PC-9 (cell line): ENCODE measurements at regions of chr2 and their contacts with region 1.

Region 1: GRCh38 chr2:232979871-232980461 is 33.1 kb downstream of the NGEF start:
- DNase-seq: peak; percentile 91 to 99
- H3K4me3 ChIP-seq: peak overlapping the region; percentile 33; the same call in 1 of the 2 replicates
- H3K27ac ChIP-seq: peak overlapping the region; percentile 95
- H3K4me1 ChIP-seq: peaks cover 51% of the 10 kb centered on the region
- H3K27me3 ChIP-seq: no peaks in the 10 kb centered on the region
- CTCF ChIP-seq: peak; percentile 44; the same call in 1 of the 2 replicates

Region 2: DNA sequence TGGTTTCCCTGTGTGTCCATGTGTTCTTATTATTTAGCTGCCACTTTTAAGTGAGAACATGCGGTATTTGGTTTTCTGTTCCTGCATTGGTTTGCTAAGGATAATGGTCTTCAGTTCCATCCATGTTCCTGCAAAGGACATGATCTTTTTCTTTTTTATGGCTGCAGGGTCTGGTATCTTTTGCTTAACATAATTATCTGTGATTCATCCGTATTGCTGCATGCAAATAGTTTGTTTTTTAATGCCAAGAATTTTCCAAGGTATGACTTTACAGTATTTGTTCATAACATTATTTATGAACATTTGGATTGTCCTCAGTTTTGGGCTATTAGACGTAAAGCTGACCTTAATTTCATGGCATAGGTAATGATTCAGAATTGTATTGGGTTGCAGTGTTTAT is 265.0 kb before region 1 on chr2:
- CTCF ChIA-PET with region 1: no interaction called
- POLR2A ChIA-PET with region 1: no interaction called
- intact Hi-C with region 1: no loop called
- DNase-seq: peak in 1 of 2 experiments; percentile 34
- H3K4me3 ChIP-seq: no peak overlapping the region
- H3K27ac ChIP-seq: no peak overlapping the region
- H3K4me1 ChIP-seq: no peaks in the 10 kb centered on the region
- H3K27me3 ChIP-seq: no peaks in the 10 kb centered on the region
- CTCF ChIP-seq: no peak

Region 3: DNA sequence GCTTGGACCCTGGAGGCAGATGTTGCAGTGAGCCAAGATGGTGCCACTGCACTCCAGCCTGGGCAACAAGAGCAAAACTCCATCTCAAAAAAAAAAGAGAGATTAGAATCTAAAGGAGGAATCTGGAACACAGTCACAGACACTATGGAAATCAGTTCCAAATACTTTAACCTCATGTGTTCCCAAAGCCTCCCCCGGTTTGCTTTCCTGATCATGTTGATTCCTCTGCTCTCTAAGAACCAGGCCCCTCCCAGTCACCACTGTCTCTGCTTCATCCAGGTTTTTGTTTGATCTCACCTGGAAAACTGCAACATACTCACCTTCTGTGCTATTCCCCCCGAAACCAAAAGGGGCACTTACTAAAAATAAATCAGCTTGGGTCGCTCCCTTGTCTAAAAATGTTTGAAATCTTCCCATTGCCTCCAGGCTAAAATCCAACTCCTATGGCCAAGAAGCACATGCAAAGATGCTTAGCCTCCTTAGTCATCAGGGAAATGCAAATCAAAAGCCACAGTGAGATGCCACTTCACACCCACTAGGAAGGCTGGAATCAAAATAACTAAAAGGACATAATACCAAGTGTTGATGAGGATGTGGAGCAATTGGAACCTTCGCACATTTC is 46.3 kb after region 1 on chr2:
- CTCF ChIA-PET with region 1: interaction called, 7 read pairs
- POLR2A ChIA-PET with region 1: no interaction called
- intact Hi-C with region 1: loop called (anchors 1 kb)
- DNase-seq: peak; percentile 69 to 97
- H3K4me3 ChIP-seq: no peak overlapping the region
- H3K27ac ChIP-seq: peak overlapping the region; percentile 72
- H3K4me1 ChIP-seq: peaks cover 45% of the 10 kb centered on the region
- H3K27me3 ChIP-seq: no peaks in the 10 kb centered on the region
- CTCF ChIP-seq: peak; percentile 51

Region 4: DNA sequence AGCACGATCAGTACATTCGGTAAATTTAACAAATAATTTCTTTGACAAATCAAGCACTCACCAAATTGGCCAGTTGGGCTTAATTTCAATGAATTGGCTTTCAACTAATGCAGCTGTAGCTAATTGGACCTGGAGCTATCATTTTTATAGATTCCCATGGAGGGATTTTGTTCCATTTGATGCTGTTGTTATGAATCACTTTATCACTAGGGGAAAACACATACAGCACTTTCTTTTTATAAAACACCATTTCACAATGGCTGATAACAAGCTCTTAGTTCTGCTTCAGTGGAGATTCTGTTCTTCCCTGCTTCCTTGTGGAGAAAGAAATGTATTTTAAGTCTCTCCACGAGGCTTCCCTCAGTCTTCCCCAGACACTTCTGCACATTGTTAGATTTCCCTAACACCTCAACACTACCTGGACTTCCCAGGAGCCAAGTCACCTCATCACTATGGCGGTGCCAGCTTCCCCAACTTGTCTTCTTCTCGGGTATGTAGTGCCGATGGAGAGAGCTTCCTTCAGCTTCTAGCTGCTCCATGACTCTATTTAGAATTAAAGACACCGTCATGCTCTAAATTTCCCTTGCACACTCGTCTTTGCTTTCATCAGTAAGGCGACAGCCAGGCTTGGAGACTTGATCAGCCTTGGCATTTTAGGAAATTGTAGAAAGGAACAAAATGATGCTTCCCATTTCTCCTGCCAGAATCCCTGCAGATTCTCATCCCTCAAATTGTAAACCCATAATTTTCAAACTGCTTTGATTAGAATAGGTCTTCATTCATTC is 152.2 kb after region 1 on chr2:
- CTCF ChIA-PET with region 1: no interaction called
- POLR2A ChIA-PET with region 1: interaction called, 28 read pairs
- intact Hi-C with region 1: no loop called
- DNase-seq: peak in 1 of 2 experiments; percentile 61
- H3K4me3 ChIP-seq: no peak overlapping the region
- H3K27ac ChIP-seq: no peak overlapping the region
- H3K4me1 ChIP-seq: peaks cover 29% of the 10 kb centered on the region
- H3K27me3 ChIP-seq: no peaks in the 10 kb centered on the region
- CTCF ChIP-seq: no peak

Region 5: DNA sequence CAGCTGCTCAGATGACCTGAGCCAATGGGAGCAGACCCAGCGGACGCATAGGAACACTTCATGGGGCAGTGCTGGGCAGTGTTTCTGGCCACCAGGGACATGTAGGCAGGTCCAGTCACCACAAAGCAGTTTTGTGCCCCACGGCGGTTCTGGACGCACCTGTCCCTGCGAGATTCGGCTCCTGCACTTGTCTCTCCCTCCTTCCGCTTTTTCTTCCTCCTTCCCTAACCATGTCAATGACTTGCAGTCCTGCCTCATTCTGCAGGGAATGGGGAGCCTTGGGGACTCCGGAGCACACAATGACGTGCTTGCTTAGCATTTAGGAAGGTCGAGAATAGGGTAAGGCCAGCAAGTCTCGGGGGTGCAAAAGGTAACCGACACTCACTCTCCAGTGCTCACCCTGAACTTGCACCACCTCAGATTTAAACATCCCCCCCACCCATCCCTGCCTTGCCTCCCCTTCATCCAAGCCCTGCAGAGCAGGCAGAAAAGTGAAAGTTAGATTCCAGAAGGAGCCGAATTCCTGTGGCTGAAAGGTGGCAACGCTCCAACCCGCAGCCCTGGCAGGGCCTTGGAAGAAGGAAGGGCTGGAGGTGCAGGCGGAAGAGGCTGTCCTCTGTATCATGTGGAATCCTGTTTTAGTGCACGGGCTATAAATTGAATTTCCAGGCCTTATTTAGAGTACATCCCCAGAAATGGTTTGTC is 231.0 kb after region 1 on chr2:
- CTCF ChIA-PET with region 1: interaction called, 3 read pairs
- POLR2A ChIA-PET with region 1: no interaction called
- intact Hi-C with region 1: loop called (anchors 1 kb)
- DNase-seq: peak; percentile 92 to 97
- H3K4me3 ChIP-seq: no peak overlapping the region
- H3K27ac ChIP-seq: peak overlapping the region; percentile 28; the same call in 1 of the 2 replicates
- H3K4me1 ChIP-seq: peaks cover 57% of the 10 kb centered on the region
- H3K27me3 ChIP-seq: no peaks in the 10 kb centered on the region
- CTCF ChIP-seq: no peak

Region 6: DNA sequence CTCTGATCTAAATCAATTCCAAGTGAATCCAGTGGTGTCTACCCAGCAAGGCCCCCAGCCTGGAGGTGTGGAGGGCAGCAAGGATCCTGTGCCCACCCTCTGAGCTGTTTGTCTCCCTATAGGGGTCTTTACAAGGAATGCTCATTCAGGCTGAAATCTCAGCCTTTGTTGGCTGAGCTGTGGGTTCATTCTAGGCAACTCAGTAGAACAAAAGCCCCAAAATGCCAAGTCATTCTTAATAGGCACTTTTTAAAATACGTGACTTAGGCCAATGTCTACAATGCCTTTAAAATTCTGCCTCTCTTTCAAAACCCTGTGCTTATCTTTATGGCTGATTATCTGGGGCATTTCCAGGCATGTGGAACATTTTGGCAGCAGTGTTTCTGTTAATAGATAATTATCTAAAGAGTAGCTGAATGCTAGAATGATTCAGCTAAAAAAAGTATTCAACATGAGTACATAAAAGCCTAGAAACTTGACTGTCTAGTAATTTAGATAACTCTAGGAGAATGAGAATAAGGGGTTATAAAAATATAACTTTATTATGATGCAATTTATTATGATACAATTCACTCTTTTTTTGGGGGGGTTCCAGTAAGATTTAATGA is 720.2 kb after region 1 on chr2:
- CTCF ChIA-PET with region 1: no interaction called
- POLR2A ChIA-PET with region 1: no interaction called
- intact Hi-C with region 1: no loop called
- DNase-seq: peak; percentile 67 to 98
- H3K4me3 ChIP-seq: peak overlapping the region; percentile 69; the same call in 1 of the 2 replicates
- H3K27ac ChIP-seq: peak overlapping the region; percentile 97
- H3K4me1 ChIP-seq: peaks cover 92% of the 10 kb centered on the region
- H3K27me3 ChIP-seq: no peaks in the 10 kb centered on the region
- CTCF ChIP-seq: no peak